K562 (cell line): ENCODE measurements at regions of chr2 and their contacts with region 1.

Region 1: GRCh38 chr2:191555092-191555742 is 122.7 kb upstream of the NABP1 start:
- DNase-seq: peak; percentile 63 to 87 (median 73)
- ATAC-seq: peak; percentile 90
- H3K4me3 ChIP-seq: no peak overlapping the region
- H3K27ac ChIP-seq: no peak overlapping the region
- H3K4me1 ChIP-seq: peaks cover 4 to 15% of the 10 kb centered on the region in 2 experiments; a peak in 3 of 5 replicates
- H3K27me3 ChIP-seq: no peaks in the 10 kb centered on the region
- CTCF ChIP-seq: peak; percentile 66 to 76 (median 72)
- EP300 ChIP-seq: no peak
- POLR2A ChIP-seq: no peak
- RAD21 ChIP-seq: peak; percentile 83 to 84

Region 2: GRCh38 chr2:190970873-190971506 is 584.2 kb before region 1 on chr2:
- CTCF ChIA-PET with region 1: no interaction called
- POLR2A ChIA-PET with region 1: no interaction called
- in situ Hi-C with region 1: no loop called
- intact Hi-C with region 1: no loop called
- DNase-seq: no peak
- ATAC-seq: no peak
- H3K4me3 ChIP-seq: no peak overlapping the region
- H3K27ac ChIP-seq: no peak overlapping the region
- H3K4me1 ChIP-seq: no peaks in the 10 kb centered on the region
- H3K27me3 ChIP-seq: no peaks in the 10 kb centered on the region
- CTCF ChIP-seq: no peak
- EP300 ChIP-seq: no peak
- POLR2A ChIP-seq: no peak
- RAD21 ChIP-seq: no peak

Region 3: DNA sequence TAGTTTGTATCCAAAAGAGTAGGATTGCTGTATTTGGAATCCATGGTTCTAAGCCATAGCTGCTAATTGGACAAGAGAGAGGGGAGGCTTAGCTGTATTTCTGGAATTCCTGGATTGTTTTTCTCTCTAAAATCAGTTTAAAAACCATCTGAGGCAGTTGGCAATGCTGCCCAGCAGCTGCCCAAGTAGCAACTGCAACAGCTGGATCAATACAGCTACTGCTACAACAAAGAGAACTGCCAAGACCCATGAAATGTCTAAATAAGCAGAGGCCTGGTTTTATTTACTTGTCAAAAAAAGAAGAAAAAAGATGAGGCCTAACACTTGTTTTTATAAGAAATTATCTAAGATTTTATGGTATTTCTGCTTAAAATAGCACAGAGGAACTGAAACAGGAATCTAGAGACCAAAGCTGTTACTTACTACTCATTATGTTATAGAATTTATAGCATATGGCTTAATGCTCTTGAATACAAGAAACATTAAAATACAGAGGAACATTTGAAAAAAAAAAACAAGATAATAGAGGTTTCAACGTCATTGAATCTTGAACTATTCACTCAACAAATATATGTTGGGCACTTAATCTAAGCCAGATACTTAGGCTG is 600.4 kb after region 1 on chr2:
- CTCF ChIA-PET with region 1: no interaction called
- POLR2A ChIA-PET with region 1: no interaction called
- in situ Hi-C with region 1: loop called (anchors 5 kb)
- intact Hi-C with region 1: no loop called
- DNase-seq: no peak
- ATAC-seq: no peak
- H3K4me3 ChIP-seq: no peak overlapping the region
- H3K27ac ChIP-seq: no peak overlapping the region
- H3K4me1 ChIP-seq: no peaks in the 10 kb centered on the region
- H3K27me3 ChIP-seq: no peaks in the 10 kb centered on the region
- CTCF ChIP-seq: no peak
- EP300 ChIP-seq: no peak
- POLR2A ChIP-seq: no peak
- RAD21 ChIP-seq: no peak

Region 4: GRCh38 chr2:192162392-192163042 is 607.3 kb after region 1 on chr2:
- CTCF ChIA-PET with region 1: interaction called, 4 read pairs
- POLR2A ChIA-PET with region 1: interaction called, 3 read pairs
- in situ Hi-C with region 1: loop called (anchors 5 kb)
- intact Hi-C with region 1: loop called (anchors 1 kb)
- DNase-seq: peak; percentile 26 to 78 (median 37)
- ATAC-seq: peak; percentile 93
- H3K4me3 ChIP-seq: no peak overlapping the region
- H3K27ac ChIP-seq: no peak overlapping the region
- H3K4me1 ChIP-seq: no peaks in the 10 kb centered on the region
- H3K27me3 ChIP-seq: no peaks in the 10 kb centered on the region
- CTCF ChIP-seq: peak; percentile 66 to 79 (median 67)
- EP300 ChIP-seq: no peak
- POLR2A ChIP-seq: no peak
- RAD21 ChIP-seq: peak; percentile 91 to 92